AG04450 (cell line): ENCODE measurements at regions of chr12 and their contacts with region 1.

Region 1: DNA sequence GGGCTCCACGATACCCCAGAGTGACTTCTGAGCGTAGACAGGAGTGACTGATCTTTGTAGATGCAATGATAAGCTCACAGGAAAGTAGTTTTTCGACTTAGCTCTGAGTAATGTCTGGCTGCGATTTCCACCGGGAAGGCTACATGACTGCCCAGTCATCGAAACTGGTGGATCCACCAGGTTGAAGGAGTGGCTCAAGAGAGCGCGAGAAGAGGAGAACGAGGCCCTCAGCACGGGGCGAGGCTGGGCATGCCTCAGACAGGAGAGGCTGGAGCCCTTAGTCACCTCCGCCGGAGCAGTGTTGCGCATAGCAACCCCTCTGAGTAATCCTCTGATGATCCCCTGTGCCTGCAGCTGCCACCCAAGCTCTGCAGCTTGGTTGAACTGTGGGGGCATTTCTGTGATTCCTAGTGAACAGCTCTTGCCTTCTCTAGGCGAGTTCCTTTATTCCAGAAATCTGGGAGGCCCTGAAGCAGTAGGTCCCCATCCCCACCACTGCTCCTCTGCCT is 25.6 kb downstream of the ELK3 start:
- DNase-seq: peak; percentile 93
- H3K4me3 ChIP-seq: peak overlapping the region; percentile 25
- H3K27ac ChIP-seq: peak overlapping the region; percentile 98
- H3K27me3 ChIP-seq: no peaks in the 10 kb centered on the region
- CTCF ChIP-seq: no peak

Region 2: GRCh38 chr12:95733141-95733825 is 486.5 kb before region 1 on chr12:
- CTCF ChIA-PET with region 1: no interaction called
- POLR2A ChIA-PET with region 1: no interaction called
- DNase-seq: peak; percentile 82
- H3K4me3 ChIP-seq: no peak overlapping the region
- H3K27ac ChIP-seq: peak overlapping the region; percentile 47
- H3K27me3 ChIP-seq: no peaks in the 10 kb centered on the region
- CTCF ChIP-seq: no peak

Region 3: GRCh38 chr12:96035278-96036236 is 184.2 kb before region 1 on chr12 and contains the start of gene LTA4H:
- CTCF ChIA-PET with region 1: interaction called, 10 read pairs
- POLR2A ChIA-PET with region 1: no interaction called
- DNase-seq: peak; percentile 97
- H3K4me3 ChIP-seq: peak within 1 kb of the TSS; percentile 95
- H3K27ac ChIP-seq: peak within 1 kb of the TSS; percentile 62
- H3K27me3 ChIP-seq: no peaks in the 10 kb centered on the region
- CTCF ChIP-seq: no peak
- polyA plus RNA-seq, gene LTA4H: 77.2 and 93.6 TPM in 2 replicates

Region 4: DNA sequence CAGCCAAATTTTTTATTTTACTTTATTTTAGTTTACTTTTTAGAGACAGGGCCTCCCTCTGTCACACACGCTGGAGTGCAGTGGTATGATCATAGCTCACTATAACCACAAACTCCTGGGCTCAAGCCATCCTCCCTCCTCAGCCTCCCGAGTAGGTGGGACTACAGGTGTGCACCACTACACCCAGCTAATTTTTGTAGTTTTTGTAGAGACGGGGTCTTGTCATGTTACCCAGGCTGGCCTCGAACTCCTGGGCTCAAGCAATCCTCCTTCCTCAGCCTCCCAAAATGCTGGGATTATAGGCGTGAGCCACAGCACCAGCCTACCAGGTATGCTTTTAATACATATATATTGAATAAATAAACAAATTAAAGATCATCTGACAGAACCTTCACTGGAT is 151.6 kb before region 1 on chr12:
- CTCF ChIA-PET with region 1: interaction called, 24 read pairs
- POLR2A ChIA-PET with region 1: interaction called, 4 read pairs
- DNase-seq: no peak
- H3K4me3 ChIP-seq: no peak overlapping the region
- H3K27ac ChIP-seq: no peak overlapping the region
- H3K27me3 ChIP-seq: peaks cover 13% of the 10 kb centered on the region
- CTCF ChIP-seq: no peak

Region 5: DNA sequence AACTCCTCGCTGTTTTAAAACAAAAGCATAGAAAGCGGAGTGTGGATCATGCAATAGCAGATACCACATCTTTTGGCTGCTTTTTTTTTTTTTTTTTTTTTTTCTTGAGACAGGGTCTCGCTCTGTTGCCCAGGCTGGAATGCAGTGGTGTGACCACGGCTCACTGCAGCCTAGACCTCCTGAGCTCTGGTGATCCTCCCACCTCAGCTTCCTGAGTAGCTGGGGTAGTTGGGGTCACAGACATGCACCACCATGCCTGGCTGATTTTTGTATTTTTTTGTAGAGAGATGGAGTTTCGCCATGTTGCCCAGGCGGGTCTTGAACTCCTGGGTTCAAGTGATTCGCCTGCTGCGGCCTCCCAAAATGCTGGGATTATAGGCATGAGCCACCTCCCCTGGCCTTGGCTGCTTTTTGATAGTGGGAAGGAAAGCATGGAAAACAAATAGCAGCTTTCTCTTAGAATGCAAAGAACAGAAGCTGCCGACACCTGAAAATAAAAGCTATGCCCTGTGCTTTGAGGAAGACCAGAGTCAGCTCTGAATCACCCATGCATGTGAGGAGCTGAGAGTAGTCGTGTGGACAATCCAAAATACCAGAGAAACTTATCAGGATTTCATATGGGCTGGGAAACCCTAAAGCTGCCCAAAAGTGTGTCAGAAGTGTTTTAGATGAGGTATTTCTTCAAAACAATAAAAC is 29.2 kb before region 1 on chr12:
- CTCF ChIA-PET with region 1: interaction called, 14 read pairs
- POLR2A ChIA-PET with region 1: interaction called, 5 read pairs
- DNase-seq: no peak
- H3K4me3 ChIP-seq: no peak overlapping the region
- H3K27ac ChIP-seq: no peak overlapping the region
- H3K27me3 ChIP-seq: no peaks in the 10 kb centered on the region
- CTCF ChIP-seq: no peak

Region 6: GRCh38 chr12:96237465-96238077 is 17.8 kb after region 1 on chr12:
- CTCF ChIA-PET with region 1: interaction called, 20 read pairs
- POLR2A ChIA-PET with region 1: interaction called, 9 read pairs
- DNase-seq: peak; percentile 81
- H3K4me3 ChIP-seq: peak overlapping the region; percentile 3; the same call in 1 of the 2 replicates
- H3K27ac ChIP-seq: peak overlapping the region; percentile 81
- H3K27me3 ChIP-seq: no peaks in the 10 kb centered on the region
- CTCF ChIP-seq: no peak

Region 7: DNA sequence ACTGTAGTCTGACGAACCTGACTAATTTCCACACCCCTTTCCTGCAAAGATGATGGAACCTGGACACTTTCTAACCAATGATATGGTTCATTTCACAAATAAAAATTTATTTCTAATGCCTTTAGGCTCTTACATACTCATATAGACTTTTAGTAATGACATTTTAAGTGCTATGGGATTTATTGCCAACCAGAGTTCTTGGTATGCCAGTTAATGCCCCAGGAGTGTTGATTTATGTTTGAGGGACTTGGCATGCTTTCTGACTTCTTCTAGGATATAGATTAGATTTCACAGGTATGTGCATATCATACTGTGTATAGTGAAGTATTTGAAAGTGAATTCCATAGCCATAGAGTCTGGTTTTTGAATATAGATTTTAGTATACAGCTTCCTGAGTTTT is 429.2 kb after region 1 on chr12:
- CTCF ChIA-PET with region 1: no interaction called
- POLR2A ChIA-PET with region 1: no interaction called
- DNase-seq: no peak
- H3K4me3 ChIP-seq: no peak overlapping the region
- H3K27ac ChIP-seq: no peak overlapping the region
- H3K27me3 ChIP-seq: no peaks in the 10 kb centered on the region
- CTCF ChIP-seq: no peak